HepG2 (cell line): ENCODE measurements at regions of chr22 and their contacts with region 1.

Region 1: GRCh38 chr22:45263463-45264269 is 21.1 kb upstream of the UPK3A start:
- DNase-seq: peak; percentile 75
- ATAC-seq: peak; percentile 93
- H3K4me3 ChIP-seq: peak overlapping the region in 1 of 3 experiments; percentile 43; a peak in 2 of 6 replicates
- H3K27ac ChIP-seq: no peak overlapping the region
- H3K4me1 ChIP-seq: peaks cover 46% of the 10 kb centered on the region
- H3K27me3 ChIP-seq: peaks cover 7 to 18% of the 10 kb centered on the region in 2 experiments; a peak in 4 of 5 replicates
- CTCF ChIP-seq: peak; percentile 98
- EP300 ChIP-seq: 0 out of 4 replicates have a peak, but pooled peaks of 1 of the 2 experiments have one; percentile 10
- POLR2A ChIP-seq: no peak
- RAD21 ChIP-seq: peak; percentile 93

Region 2: DNA sequence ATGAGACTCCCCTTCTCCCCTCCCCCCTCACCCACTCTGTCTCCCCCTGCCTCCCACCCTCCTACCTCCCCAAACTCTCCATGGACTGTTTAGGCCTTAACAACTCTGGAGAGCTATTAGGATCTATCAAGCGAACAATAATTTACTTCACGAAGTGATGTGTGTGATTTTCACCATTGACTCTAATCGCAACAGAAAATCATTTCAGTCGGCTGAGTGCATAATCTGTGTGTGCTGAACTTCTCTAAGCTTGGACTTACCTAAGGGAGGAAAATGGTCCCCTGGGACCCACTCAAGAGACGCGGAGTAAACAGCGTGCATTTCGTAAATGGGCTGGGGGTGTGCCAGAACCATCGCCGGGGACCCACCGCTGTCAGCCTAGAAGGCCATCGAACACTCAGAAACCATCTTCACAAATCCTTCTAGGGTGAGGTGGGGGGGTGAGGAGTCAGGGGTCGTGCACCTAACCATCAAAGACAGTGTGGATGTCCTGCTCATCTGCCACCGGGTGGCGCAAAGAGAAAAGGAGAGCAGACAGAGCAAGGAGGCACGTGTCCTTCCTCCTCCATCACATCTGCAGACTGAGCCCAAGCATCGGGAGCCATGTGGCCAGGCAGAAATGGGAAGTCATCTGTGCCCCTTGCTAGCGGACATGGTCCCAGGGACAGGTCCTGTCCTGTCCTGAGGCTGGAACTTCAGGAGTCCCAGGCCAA is 162.0 kb before region 1 on chr22:
- CTCF ChIA-PET with region 1: interaction called, 8 read pairs
- POLR2A ChIA-PET with region 1: no interaction called
- in situ Hi-C with region 1: loop called (anchors 5 kb)
- intact Hi-C with region 1: loop called (anchors 5 kb)
- DNase-seq: peak; percentile 67
- ATAC-seq: peak; percentile 84
- H3K4me3 ChIP-seq: no peak overlapping the region
- H3K27ac ChIP-seq: no peak overlapping the region
- H3K4me1 ChIP-seq: peaks cover 11% of the 10 kb centered on the region; the same call in 1 of the 2 replicates
- H3K27me3 ChIP-seq: peaks cover 2 to 35% of the 10 kb centered on the region in 2 experiments; a peak in 4 of 5 replicates
- CTCF ChIP-seq: peak; percentile 88
- EP300 ChIP-seq: no peak
- POLR2A ChIP-seq: no peak
- RAD21 ChIP-seq: peak; percentile 76

Region 3: GRCh38 chr22:45192701-45193187 is 70.9 kb before region 1 on chr22:
- CTCF ChIA-PET with region 1: no interaction called
- POLR2A ChIA-PET with region 1: no interaction called
- in situ Hi-C with region 1: no loop called
- intact Hi-C with region 1: loop called (anchors 5 kb)
- DNase-seq: peak; percentile 63
- ATAC-seq: peak; percentile 75
- H3K4me3 ChIP-seq: no peak overlapping the region
- H3K27ac ChIP-seq: no peak overlapping the region
- H3K4me1 ChIP-seq: peaks cover 31% of the 10 kb centered on the region
- H3K27me3 ChIP-seq: no peaks in the 10 kb centered on the region
- CTCF ChIP-seq: peak; percentile 48
- EP300 ChIP-seq: no peak
- POLR2A ChIP-seq: no peak
- RAD21 ChIP-seq: peak; percentile 19; the same call in 1 of the 2 replicates

Region 4: DNA sequence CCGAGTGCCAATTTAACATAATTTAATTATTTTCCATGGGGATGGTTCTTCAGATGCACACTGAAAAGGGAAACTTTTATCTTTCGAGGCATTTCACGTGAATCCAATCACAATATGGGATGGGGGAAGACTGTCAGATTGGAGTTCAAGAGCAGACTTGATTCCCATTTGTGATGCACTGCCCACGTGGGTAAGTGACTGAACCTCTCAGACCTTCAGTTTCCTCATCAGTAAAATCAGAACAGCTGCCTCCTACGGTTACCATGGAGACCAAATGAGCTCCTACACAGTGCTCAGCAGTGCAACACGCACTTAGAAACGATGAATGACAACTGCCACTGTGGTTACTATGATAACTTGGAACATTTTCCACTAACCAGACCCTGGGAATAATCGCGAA is 44.7 kb before region 1 on chr22:
- CTCF ChIA-PET with region 1: no interaction called
- POLR2A ChIA-PET with region 1: no interaction called
- in situ Hi-C with region 1: no loop called
- intact Hi-C with region 1: loop called (anchors 5 kb)
- DNase-seq: no peak
- ATAC-seq: no peak
- H3K4me3 ChIP-seq: no peak overlapping the region
- H3K27ac ChIP-seq: no peak overlapping the region
- H3K4me1 ChIP-seq: peaks cover 30% of the 10 kb centered on the region
- H3K27me3 ChIP-seq: no peaks in the 10 kb centered on the region
- CTCF ChIP-seq: no peak
- EP300 ChIP-seq: no peak
- POLR2A ChIP-seq: no peak
- RAD21 ChIP-seq: no peak

Region 5: DNA sequence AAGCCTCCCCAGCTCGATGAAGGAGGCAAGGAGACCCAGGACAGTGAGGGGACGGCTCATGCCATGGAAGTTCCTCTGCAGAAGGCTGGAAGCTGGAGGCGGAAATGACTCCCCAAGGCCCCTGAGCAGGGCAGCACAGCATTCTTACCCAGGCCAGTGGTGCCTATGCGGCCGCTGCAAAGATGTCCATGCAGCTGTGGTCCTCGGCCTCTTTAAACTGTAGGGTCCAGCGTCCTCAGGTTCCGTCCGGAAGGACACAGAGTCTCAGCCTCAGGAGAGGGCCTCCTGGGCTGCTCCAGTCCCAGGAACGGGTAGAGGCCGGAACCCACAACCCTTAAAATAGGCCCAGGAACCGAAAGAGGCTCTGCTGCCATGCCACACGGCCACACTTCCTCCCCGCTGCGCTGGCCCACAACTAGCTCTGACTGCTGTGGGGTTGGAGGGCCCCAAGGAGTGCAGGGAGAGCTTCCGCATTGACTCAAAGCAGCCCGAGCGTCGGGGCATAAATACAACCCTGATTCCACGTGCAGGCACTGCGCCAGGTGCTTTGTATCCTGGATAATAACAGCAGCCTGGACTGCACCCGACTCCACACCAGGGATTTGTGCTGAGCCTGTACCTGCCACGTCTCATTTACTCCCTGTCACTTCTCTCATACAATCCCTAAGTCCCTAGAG is 28.4 kb before region 1 on chr22:
- CTCF ChIA-PET with region 1: no interaction called
- POLR2A ChIA-PET with region 1: no interaction called
- in situ Hi-C with region 1: no loop called
- intact Hi-C with region 1: no loop called
- DNase-seq: no peak
- ATAC-seq: no peak
- H3K4me3 ChIP-seq: no peak overlapping the region
- H3K27ac ChIP-seq: no peak overlapping the region
- H3K4me1 ChIP-seq: peaks cover 67% of the 10 kb centered on the region
- H3K27me3 ChIP-seq: no peaks in the 10 kb centered on the region
- CTCF ChIP-seq: no peak
- EP300 ChIP-seq: no peak
- POLR2A ChIP-seq: no peak
- RAD21 ChIP-seq: no peak

Region 6: DNA sequence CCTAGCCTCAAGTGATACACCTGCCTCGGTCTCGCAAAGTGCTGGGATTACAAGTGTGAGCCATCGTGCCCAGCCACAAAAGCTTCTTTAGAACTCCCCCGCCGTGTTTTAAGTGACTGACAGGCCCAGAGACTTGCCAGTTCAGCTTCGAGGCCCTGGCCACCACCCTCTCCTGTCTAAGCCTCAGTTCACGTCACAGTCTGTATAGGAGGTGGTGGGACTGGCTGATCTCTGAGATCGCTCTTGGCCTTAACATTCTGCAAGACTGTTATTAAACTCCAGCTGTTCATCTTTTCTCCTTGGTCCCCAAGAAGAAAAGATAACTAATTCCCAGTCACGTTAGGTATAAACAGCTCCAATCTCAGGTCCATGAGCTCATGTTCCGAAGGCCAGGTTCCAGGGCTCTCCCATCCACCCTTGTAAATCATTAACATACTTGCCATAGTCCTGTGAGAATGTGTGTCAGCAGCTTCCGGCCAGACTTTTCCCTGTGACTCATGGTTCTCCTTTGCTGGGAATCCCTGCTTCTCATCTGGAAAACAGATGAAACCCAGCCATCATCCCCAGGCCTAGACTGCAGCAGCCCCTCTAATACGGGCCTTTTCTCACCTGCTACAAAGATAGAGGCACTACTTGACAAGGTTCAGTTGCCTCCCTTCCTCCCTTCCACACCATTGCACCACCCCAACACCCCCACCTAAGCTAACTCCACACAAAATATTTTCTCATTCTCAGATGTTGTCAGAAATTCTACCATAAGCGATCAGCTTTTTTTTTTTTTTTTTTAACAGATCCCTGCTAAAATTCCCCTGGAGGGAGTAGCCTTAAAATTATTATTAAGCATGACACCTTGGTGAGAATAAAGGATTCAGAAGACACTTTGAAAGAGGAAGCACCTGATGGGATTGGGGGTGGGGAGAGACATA is 17.3 kb before region 1 on chr22:
- CTCF ChIA-PET with region 1: no interaction called
- POLR2A ChIA-PET with region 1: interaction called, 9 read pairs
- in situ Hi-C with region 1: no loop called
- intact Hi-C with region 1: loop called (anchors 2 kb)
- DNase-seq: peak; percentile 98
- ATAC-seq: peak; percentile 87
- H3K4me3 ChIP-seq: peak overlapping the region in 2 of 3 experiments; percentile 3 to 52; a peak in 3 of 6 replicates
- H3K27ac ChIP-seq: peak overlapping the region; percentile 89
- H3K4me1 ChIP-seq: peaks cover 84% of the 10 kb centered on the region
- H3K27me3 ChIP-seq: no peaks in the 10 kb centered on the region
- CTCF ChIP-seq: no peak
- EP300 ChIP-seq: peak in 1 of 2 experiments; percentile 73; a peak in 2 of 4 replicates
- POLR2A ChIP-seq: peak in 1 of 2 experiments; percentile 58; a peak in 3 of 4 replicates
- RAD21 ChIP-seq: no peak

Region 7: DNA sequence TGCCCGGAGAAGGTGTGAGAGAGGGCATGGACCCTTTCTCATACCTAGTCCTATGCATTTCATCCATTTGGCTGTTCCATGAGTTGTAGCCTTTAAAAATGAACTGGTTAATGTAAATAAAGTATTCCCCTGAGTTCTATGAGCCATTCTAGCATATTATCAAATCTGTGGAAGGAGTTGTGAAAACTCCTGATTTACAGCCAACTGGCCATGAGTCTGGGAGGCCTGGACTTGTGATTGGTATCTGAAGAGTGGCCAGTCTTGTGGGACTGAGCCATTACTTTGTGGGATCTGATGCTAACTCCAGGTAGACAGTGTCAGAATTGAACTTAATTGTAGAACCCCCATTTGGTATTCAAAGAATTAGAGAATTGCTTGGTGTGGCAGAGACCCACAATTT is 94.5 kb after region 1 on chr22:
- CTCF ChIA-PET with region 1: no interaction called
- POLR2A ChIA-PET with region 1: no interaction called
- in situ Hi-C with region 1: no loop called
- intact Hi-C with region 1: no loop called
- DNase-seq: no peak
- ATAC-seq: no peak
- H3K4me3 ChIP-seq: no peak overlapping the region
- H3K27ac ChIP-seq: no peak overlapping the region
- H3K4me1 ChIP-seq: no peaks in the 10 kb centered on the region
- H3K27me3 ChIP-seq: no peaks in the 10 kb centered on the region
- CTCF ChIP-seq: no peak
- EP300 ChIP-seq: no peak
- POLR2A ChIP-seq: no peak
- RAD21 ChIP-seq: no peak